Calu3 (cell line): ENCODE measurements at regions of chr17 and their contacts with region 1.

Region 1: DNA sequence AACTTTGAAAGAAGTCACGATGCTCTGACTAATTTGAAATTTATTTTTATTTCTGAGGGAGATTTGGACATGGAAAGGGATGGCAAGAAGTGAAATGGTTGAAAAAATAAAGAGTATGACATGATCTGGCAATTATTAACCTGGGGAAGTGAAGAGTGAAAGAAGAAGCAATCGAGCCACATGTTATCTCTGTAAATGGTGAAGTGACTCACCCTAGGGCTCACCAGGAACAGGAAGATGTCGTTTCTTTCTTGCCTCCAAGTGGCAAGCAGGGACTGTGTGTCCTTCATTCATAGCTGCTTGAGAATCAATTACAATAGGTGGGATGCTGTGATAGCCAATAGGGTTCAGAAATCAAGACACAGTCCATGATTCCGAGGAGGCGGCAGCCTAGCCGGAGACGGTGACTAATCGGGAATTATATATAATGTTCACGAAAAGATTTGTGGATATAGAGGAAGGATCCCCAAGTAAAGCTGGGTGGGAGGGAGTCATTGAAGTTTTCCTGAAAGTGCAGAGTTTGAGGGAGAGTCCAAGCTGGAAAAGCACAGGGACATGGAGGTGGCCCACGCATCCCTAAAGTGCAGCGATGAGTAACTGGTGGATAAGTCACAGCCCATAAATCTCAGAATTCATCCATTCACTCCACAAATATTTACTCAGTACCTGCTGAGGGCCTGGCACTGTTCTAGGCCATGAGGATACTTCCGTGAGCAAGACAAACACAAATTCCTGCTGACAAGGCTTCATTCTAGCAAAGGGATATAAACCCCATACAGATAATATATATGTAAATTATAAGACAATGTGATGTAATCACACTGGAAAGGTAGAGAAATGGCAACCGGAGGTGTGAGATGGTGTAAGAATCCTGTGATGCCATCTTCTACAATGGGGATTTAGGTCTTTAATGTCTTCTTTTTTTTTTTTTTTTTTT is 18.4 kb upstream of the KRT20 start:
- DNase-seq: peak; percentile 82
- H3K4me3 Mint-ChIP-seq: peak overlapping the region; percentile 51
- H3K27ac Mint-ChIP-seq: peak overlapping the region; percentile 92
- H3K4me1 Mint-ChIP-seq: peaks cover 86% of the 10 kb centered on the region
- H3K27me3 Mint-ChIP-seq: no peaks in the 10 kb centered on the region
- CTCF ChIP-seq: no peak

Region 2: GRCh38 chr17:40387680-40388079 is 515.7 kb before region 1 on chr17:
- CTCF ChIA-PET with region 1: no interaction called
- intact Hi-C with region 1: no loop called
- DNase-seq: no peak
- H3K4me3 Mint-ChIP-seq: no peak overlapping the region
- H3K27ac Mint-ChIP-seq: no peak overlapping the region
- H3K4me1 Mint-ChIP-seq: no peaks in the 10 kb centered on the region
- H3K27me3 Mint-ChIP-seq: no peaks in the 10 kb centered on the region
- CTCF ChIP-seq: no peak

Region 3: GRCh38 chr17:40866838-40867237 is 36.6 kb before region 1 on chr17 and contains the start of gene KRT12:
- CTCF ChIA-PET with region 1: no interaction called
- intact Hi-C with region 1: no loop called
- DNase-seq: no peak
- H3K4me3 Mint-ChIP-seq: no peak within 1 kb of the TSS
- H3K27ac Mint-ChIP-seq: no peak within 1 kb of the TSS
- H3K4me1 Mint-ChIP-seq: no peaks in the 10 kb centered on the region
- H3K27me3 Mint-ChIP-seq: no peaks in the 10 kb centered on the region
- CTCF ChIP-seq: no peak
- total RNA-seq, gene KRT12: 2.4 and 2.7 TPM in 2 replicates

Region 4: DNA sequence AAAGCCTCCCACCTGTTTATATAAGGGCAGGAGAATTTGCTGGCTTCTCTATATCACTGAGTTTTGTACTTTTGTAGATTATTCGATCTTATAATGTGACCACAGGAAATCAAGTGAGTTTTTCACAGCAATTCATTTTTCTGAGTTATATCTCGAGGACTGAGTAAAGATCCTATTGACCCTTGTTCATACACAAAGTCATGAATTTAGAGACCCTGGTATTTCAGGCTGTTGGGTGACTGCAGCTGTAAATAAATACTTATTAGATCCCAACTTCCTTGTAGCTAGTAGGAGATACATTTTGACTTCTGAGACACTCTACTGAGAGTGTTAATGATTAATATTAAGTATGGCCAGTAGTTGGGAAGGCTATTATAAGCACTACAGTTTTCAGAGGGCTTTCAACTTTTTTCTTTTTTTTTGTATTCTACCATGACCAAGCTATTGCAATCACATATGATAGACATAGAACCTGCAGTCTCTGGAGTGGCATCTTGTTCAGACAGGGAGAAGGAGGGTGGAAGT is 15.1 kb before region 1 on chr17:
- CTCF ChIA-PET with region 1: interaction called, 12 read pairs
- intact Hi-C with region 1: no loop called
- DNase-seq: no peak
- H3K4me3 Mint-ChIP-seq: no peak overlapping the region
- H3K27ac Mint-ChIP-seq: peak overlapping the region; percentile 4
- H3K4me1 Mint-ChIP-seq: peaks cover 17% of the 10 kb centered on the region
- H3K27me3 Mint-ChIP-seq: no peaks in the 10 kb centered on the region
- CTCF ChIP-seq: no peak